Right lobe of liver (tissue), 6 donors: ENCODE measurements at regions of chr1 and their contacts with region 1.

Region 1: DNA sequence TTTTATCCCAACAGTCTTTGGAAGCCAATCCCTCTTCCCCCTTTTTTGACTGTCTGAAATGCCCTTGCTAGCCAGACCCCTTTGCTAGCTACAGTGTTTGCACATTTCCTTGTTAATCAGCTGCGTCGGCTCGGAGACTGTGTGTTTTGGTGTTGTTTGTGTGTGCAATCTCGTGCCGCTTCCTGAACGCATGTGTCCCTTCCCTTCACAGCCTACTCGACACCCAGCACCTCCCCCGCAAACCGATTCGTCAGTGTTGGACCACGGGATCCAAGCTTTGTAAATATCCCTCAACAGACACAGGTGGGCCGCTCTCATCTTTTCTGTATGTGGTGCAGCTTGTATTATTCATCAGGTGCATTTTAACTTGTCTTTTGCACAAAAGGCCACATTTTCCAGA is 298.7 kb downstream of the TM2D1 start:
- DNase-seq: no peak
- ATAC-seq: peak; percentile 70 to 86 (median 76)
- H3K4me3 ChIP-seq: no peak overlapping the region
- H3K27ac ChIP-seq: peak overlapping the region in 1 of 3 donors; percentile 1
- H3K4me1 ChIP-seq: no peaks in the 10 kb centered on the region
- H3K27me3 ChIP-seq: no peaks in the 10 kb centered on the region
- CTCF ChIP-seq: no peak
- POLR2A ChIP-seq: no peak

Region 2: DNA sequence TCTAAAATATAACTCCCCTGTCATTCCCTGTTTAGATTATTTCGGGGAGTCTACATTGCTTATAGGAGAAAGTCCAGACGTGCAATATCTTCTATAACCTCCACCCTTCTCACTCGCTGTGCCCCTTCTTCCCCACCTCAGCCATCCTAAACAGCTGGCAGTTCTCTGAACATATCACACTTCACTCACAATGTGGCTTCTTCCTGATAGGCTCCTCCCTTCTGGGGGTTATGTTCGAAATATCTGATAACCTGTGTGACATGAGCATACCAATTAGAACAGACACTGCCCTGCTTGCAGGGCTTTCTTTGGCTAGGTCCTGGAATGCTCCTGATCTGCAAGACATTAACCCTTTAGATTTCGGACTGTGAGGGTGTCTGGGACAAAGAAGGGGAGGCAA is 69.3 kb before region 1 on chr1:
- intact Hi-C with region 1: loop called in 1 of 2 experiments (anchors 5 kb)
- DNase-seq: no peak
- ATAC-seq: no peak
- H3K4me3 ChIP-seq: no peak overlapping the region
- H3K27ac ChIP-seq: no peak overlapping the region
- H3K4me1 ChIP-seq: no peaks in the 10 kb centered on the region
- H3K27me3 ChIP-seq: no peaks in the 10 kb centered on the region
- CTCF ChIP-seq: no peak
- POLR2A ChIP-seq: no peak